ENCODE measurements at regions of chr9 and their contacts with region 1.

Region 1: DNA sequence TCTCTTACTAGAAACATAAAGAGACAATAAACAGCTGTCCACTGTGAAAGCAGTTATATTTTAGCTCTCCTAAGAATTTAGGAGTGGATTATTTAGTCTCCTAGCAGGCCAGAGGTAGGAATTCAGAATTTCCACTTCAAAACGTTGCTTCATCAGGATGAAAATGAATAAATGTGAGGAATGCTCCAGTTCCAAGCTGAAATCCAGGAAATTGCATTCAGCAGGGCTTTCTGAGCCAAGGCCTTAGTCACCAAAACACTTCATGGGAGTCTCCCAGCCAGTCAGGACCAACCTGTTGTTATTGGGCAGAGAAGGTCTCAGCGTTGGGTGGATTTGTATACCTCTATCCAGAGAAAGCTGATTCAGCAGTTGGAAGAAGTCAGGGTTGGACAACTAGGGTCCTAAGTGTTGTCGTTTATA is 1040.3 kb downstream of the TLE1 start:
- DNase-seq: peak in 1 of 2 donors; percentile 62
- ATAC-seq: peak; percentile 83
- H3K4me3 ChIP-seq: no peak overlapping the region
- H3K27ac ChIP-seq: no peak overlapping the region
- H3K4me1 ChIP-seq: peaks cover 0 to 11% of the 10 kb centered on the region in 2 donors
- H3K27me3 ChIP-seq: no peaks in the 10 kb centered on the region

Region 2: DNA sequence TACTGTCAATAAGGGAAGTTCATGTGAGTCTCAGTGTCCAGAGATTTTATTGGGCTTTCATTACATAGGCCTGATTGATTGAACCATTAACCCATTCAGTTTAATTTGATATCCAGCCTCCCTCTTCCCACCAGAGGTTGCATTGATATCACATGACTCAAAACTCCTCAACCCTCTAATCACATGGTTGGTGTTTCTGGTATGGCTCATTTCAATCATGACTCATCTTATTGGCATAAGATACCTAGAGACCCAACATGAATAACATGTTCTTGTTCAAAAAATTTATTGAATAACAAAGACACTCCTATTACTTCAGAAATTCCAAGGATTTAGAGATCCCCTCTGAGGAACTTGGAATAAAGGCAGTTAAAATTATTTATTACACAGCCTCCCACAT is 58.1 kb after region 1 on chr9:
- intact Hi-C with region 1: loop called in 1 of 2 experiments (anchors 10 kb)
- DNase-seq: no peak
- ATAC-seq: no peak
- H3K4me3 ChIP-seq: no peak overlapping the region
- H3K27ac ChIP-seq: no peak overlapping the region
- H3K4me1 ChIP-seq: no peaks in the 10 kb centered on the region
- H3K27me3 ChIP-seq: no peaks in the 10 kb centered on the region